Common myeloid progenitor, CD34-positive (primary cell): ENCODE measurements at regions of chr2 and their contacts with region 1.

Region 1: GRCh38 chr2:160324161-160324800 is 124.2 kb upstream of the ITGB6 start:
- DNase-seq: peak; percentile 36 to 62 (median 54)
- H3K4me3 ChIP-seq: no peak overlapping the region
- H3K27ac ChIP-seq: no peak overlapping the region
- H3K4me1 ChIP-seq: peaks cover 0 to 4% (median 0%) of the 10 kb centered on the region in 4 experiments
- H3K27me3 ChIP-seq: no peaks in the 10 kb centered on the region

Region 2: DNA sequence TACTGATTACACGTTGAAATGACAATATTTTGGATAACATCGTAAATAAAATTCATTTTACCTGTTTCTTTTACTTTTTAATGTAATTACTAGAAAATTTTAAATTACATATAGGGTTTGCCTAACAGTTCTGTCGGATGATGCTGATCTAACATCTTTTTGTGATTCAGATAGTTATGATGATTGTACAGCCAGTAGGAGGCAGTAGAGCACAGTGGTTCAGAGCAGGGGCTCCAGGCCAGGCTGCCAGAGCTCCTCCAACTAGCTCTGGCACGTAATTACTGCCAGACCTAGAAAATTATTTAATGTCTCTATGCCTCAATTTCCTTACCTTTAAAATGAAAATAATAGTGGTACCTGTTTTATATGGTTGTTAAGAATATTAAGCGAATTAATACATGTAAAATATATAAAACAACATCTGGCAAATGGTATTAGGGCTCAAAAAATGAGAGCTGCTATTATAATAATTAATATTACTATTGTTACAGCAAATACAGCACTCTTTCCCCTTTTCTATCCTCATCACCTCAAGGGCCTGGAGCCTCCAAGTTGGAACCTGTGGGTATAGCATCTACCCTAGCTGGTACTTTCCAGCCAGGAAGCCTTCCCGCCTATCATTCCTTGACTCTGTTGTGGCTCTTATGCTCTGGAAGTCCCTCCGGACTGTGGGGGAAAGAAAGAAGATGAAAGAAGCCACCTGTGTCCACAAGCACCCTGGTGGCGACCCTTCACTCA is 214.2 kb before region 1 on chr2:
- CTCF ChIA-PET with region 1: interaction called, 11 read pairs
- POLR2A ChIA-PET with region 1: no interaction called
- DNase-seq: peak; percentile 63 to 85 (median 77)
- H3K4me3 ChIP-seq: no peak overlapping the region
- H3K27ac ChIP-seq: no peak overlapping the region
- H3K4me1 ChIP-seq: no peaks in the 10 kb centered on the region
- H3K27me3 ChIP-seq: no peaks in the 10 kb centered on the region

Region 3: DNA sequence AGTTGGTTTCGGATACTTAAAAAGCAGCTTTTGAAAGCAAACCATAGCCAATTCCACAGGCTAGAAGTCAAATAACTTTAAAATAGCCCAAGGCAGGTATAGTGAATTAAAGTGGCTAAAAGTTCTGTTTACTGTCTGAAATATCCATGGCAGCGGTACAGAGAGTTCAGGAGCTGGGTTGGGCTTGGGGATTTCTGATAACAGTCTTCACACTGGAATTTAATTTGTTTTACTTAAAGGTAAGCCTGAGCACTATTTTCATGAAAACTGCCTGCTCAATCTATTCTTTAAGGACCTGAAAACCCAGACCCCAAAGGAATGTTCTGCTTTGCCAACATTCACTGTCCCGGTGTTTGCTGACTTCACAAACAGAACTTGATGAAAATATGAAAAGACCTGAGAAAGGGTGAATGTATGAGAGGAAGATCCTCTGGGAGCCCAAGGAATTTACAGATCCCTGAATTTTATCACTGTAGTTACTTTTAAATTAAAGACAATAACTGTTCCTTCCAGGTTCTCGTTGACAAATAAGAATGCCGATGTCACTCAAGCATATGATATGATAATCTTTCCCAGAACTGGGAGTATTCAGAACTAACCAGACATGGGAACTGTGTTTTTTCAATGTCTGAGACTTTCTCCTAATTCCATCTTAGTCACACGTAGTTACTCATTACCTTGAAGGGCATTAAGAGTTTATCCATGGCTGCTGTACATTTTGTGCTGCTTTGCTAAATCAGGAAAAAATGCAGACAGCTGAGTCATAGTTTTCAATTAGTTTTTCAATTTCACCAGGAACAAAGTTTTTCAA is 96.0 kb before region 1 on chr2:
- CTCF ChIA-PET with region 1: no interaction called
- POLR2A ChIA-PET with region 1: no interaction called
- DNase-seq: no peak
- H3K4me3 ChIP-seq: no peak overlapping the region
- H3K27ac ChIP-seq: no peak overlapping the region
- H3K4me1 ChIP-seq: no peaks in the 10 kb centered on the region
- H3K27me3 ChIP-seq: no peaks in the 10 kb centered on the region

Region 4: GRCh38 chr2:160305081-160305760 is 19.1 kb before region 1 on chr2:
- CTCF ChIA-PET with region 1: interaction called, 11 read pairs
- POLR2A ChIA-PET with region 1: no interaction called
- DNase-seq: no peak
- H3K4me3 ChIP-seq: no peak overlapping the region
- H3K27ac ChIP-seq: no peak overlapping the region
- H3K4me1 ChIP-seq: no peaks in the 10 kb centered on the region
- H3K27me3 ChIP-seq: no peaks in the 10 kb centered on the region

Region 5: GRCh38 chr2:160918906-160919503 is 594.7 kb after region 1 on chr2:
- CTCF ChIA-PET with region 1: interaction called, 17 read pairs
- POLR2A ChIA-PET with region 1: no interaction called
- DNase-seq: peak; percentile 36 to 51 (median 51)
- H3K4me3 ChIP-seq: no peak overlapping the region
- H3K27ac ChIP-seq: no peak overlapping the region
- H3K4me1 ChIP-seq: no peaks in the 10 kb centered on the region
- H3K27me3 ChIP-seq: no peaks in the 10 kb centered on the region

Region 6: DNA sequence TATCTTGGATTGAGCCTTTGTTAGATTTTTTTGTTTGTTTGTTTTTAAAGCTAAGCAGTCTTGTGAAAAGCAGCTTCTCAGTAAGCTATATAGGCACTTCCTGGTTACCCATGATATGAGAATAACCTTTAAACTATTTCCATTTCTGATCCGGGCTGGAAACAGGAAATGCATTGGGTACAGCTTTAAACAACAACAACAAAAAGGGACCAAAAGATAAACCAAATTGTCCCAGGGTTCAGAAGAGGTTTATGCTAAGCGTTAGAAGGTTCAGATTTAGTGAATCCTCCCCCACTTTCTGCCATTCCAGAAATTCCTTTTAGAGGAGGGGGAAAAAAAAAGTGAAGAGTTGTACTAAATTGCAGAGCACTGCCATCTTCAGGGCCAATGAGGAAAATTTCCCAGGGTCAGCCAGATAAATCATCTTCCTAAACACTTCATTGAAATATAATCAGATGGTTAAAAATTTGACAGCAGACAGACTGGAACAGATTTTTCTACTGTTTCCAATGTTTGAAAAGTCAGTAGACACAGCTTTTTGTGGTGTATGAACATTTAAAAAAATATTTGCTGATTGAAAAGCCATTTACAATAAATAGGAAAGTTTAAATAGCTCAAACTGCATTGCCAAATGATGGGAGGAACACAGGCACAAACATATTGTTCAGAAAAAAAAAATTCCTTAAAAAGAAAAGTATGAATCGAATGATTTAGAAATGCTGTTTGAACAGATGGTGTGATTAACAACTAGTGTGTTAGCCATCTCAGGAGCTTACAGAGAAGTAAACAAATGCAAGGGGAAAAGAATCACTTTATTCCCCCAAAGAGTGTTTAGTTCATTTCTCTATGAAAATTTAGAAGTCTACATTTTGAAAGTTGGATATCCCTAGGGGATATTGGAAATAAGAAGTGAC is 646.0 kb after region 1 on chr2:
- CTCF ChIA-PET with region 1: interaction called, 34 read pairs
- POLR2A ChIA-PET with region 1: no interaction called
- DNase-seq: peak; percentile 37 to 57 (median 56)
- H3K4me3 ChIP-seq: peak overlapping the region in 1 of 7 experiments; percentile 36
- H3K27ac ChIP-seq: no peak overlapping the region
- H3K4me1 ChIP-seq: no peaks in the 10 kb centered on the region
- H3K27me3 ChIP-seq: no peaks in the 10 kb centered on the region

Region 7: DNA sequence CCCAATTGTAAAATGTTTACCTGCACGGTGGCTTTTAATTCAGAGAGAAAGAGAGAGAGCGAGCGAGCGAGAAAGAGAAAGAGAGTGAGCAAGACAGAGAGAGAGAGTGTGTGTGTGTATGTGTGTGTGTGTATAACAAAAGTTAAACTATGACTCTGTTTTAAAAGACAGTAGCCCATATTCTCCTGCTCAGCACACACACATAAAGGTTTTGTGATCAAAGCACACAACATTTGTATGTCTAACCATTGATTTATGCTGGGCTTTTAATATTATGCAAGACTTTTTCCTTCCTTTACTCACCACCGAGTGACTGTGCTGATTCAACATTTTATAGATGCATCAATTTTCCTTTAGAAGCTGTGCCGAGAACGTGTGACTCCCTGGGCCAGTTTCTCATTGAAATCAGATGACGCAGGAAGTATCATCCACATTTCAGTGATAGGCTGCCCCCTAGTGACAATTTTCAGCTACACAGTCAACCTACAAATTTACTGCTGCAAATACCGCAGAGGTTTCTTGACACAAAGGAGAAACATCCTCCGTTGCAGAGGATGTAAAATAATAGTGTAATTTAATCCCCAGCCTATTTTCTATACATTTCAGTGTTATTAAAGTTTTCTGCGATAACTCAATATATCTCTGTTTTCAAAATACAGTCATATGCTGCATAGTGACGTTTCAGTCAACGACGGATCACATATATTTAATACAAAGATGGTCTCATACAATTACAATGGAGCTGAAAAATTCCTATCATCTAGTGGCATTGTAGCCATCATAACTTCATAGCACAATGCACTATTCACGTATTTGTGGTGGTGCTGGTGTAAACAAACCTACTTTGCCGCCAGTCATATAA is 670.1 kb after region 1 on chr2:
- CTCF ChIA-PET with region 1: interaction called, 52 read pairs
- POLR2A ChIA-PET with region 1: no interaction called
- DNase-seq: peak; percentile 82 to 92 (median 90)
- H3K4me3 ChIP-seq: peak overlapping the region in 1 of 7 experiments; percentile 34
- H3K27ac ChIP-seq: no peak overlapping the region
- H3K4me1 ChIP-seq: peaks cover 0 to 8% (median 0%) of the 10 kb centered on the region in 4 experiments
- H3K27me3 ChIP-seq: no peaks in the 10 kb centered on the region

Region 8: DNA sequence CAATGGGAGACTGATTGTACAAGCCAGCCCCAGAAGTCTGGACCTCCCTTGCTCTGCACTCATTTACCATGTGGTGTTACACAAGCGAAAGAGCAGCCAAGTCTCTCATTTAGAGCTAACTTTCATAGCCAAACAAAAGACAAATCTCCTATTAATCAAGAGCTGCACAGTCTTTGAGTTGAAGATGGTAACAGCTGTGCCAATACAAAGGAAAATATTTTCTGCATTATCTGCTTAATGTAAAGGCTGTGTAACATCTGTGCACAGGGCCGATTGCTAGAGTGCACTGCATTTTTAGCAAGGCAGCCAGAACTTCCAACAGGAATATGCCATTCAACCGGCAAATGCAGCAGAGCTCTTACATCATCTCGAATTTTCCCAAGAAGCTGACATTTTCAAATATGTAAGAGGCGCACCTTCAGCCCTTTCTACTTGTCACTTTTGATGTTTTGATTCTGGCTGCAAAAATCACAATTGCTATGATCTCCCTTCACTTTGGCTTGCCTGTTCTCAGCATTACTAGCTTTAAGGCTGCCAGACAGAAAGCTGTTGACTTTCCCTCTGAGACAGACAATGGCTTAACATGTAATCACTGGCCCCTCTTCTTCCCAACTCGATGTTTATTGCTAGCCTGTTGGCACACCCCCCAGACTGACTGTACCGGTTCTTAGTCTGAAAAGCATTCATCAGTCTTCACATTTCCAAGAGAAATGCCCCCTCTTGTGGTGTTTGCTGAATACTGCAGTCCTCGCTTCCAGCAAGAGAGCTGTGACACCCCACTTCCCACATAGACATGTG is 739.1 kb after region 1 on chr2:
- CTCF ChIA-PET with region 1: interaction called, 12 read pairs
- POLR2A ChIA-PET with region 1: no interaction called
- DNase-seq: peak; percentile 73 to 80 (median 75)
- H3K4me3 ChIP-seq: no peak overlapping the region
- H3K27ac ChIP-seq: no peak overlapping the region
- H3K4me1 ChIP-seq: no peaks in the 10 kb centered on the region
- H3K27me3 ChIP-seq: no peaks in the 10 kb centered on the region